Endothelial cell of umbilical vein (primary cell): ENCODE measurements at regions of chr2 and their contacts with region 1.

Region 1: GRCh38 chr2:231110551-231110950 is 14.3 kb downstream of the HTR2B start:
- DNase-seq: peak; percentile 84
- H3K4me3 ChIP-seq: no peak overlapping the region
- H3K27ac ChIP-seq: no peak overlapping the region
- H3K4me1 ChIP-seq: peaks cover 12% of the 10 kb centered on the region
- H3K27me3 ChIP-seq: no peaks in the 10 kb centered on the region
- CTCF ChIP-seq: peak; percentile 15 to 30
- POLR2A ChIP-seq: no peak

Region 2: GRCh38 chr2:231124838-231125568 is 14.5 kb after region 1 on chr2 and contains the start of gene HTR2B:
- CTCF ChIA-PET with region 1: interaction called, 39 read pairs
- POLR2A ChIA-PET with region 1: no interaction called
- dilution Hi-C with region 1: no loop called
- intact Hi-C with region 1: no loop called
- DNase-seq: peak; percentile 69
- H3K4me3 ChIP-seq: peak within 1 kb of the TSS in 1 of 3 experiments; percentile 65
- H3K27ac ChIP-seq: peak within 1 kb of the TSS; percentile 23
- H3K4me1 ChIP-seq: peaks cover 38% of the 10 kb centered on the region
- H3K27me3 ChIP-seq: no peaks in the 10 kb centered on the region
- CTCF ChIP-seq: no peak
- POLR2A ChIP-seq: no peak
- total RNA-seq, gene HTR2B: 0.55 and 0.93 TPM in 2 replicates

Region 3: DNA sequence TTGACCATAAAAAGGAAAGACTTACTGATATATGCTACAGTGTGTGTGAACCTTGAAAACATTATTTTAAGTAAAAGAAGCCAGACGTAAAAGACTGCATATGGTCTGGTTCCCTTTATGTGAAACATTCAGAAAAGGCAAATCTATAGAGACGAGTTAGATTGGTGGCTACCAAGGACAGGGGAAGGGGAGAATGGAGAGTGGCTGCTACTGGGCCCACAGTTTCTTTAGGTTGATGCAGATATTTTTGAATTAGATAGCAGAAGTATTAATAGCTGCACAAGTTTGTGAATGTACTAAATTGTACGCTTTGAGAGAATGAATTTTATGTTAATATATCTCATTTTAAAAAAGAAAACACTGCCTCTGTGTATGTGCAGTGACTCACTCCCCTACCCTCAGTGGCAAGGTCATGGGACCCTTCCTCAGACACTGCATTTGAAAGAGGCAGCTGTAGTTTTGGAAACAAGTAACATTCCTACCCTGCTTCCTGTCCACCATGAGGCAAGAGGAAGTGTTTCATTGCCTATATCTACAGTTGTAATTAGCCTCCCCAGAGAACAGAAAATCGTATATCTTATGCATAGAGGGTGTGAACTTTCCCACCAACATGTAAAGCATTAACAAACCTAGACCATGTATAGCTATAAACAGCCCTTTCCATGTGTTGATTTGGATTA is 58.0 kb after region 1 on chr2:
- CTCF ChIA-PET with region 1: interaction called, 6 read pairs
- POLR2A ChIA-PET with region 1: no interaction called
- dilution Hi-C with region 1: no loop called
- intact Hi-C with region 1: loop called (anchors 2 kb)
- DNase-seq: peak; percentile 80
- H3K4me3 ChIP-seq: no peak overlapping the region
- H3K27ac ChIP-seq: peak overlapping the region; percentile 32
- H3K4me1 ChIP-seq: peaks cover 37% of the 10 kb centered on the region
- H3K27me3 ChIP-seq: no peaks in the 10 kb centered on the region
- CTCF ChIP-seq: no peak
- POLR2A ChIP-seq: peak; percentile 10

Region 4: GRCh38 chr2:231191896-231192872 is 81.6 kb after region 1 on chr2:
- CTCF ChIA-PET with region 1: interaction called, 226 read pairs
- POLR2A ChIA-PET with region 1: no interaction called
- dilution Hi-C with region 1: no loop called
- intact Hi-C with region 1: loop called (anchors 1 kb)
- DNase-seq: peak; percentile 77
- H3K4me3 ChIP-seq: no peak overlapping the region
- H3K27ac ChIP-seq: peak overlapping the region; percentile 47
- H3K4me1 ChIP-seq: peaks cover 24% of the 10 kb centered on the region
- H3K27me3 ChIP-seq: no peaks in the 10 kb centered on the region
- CTCF ChIP-seq: peak; percentile 79 to 88
- POLR2A ChIP-seq: no peak

Region 5: DNA sequence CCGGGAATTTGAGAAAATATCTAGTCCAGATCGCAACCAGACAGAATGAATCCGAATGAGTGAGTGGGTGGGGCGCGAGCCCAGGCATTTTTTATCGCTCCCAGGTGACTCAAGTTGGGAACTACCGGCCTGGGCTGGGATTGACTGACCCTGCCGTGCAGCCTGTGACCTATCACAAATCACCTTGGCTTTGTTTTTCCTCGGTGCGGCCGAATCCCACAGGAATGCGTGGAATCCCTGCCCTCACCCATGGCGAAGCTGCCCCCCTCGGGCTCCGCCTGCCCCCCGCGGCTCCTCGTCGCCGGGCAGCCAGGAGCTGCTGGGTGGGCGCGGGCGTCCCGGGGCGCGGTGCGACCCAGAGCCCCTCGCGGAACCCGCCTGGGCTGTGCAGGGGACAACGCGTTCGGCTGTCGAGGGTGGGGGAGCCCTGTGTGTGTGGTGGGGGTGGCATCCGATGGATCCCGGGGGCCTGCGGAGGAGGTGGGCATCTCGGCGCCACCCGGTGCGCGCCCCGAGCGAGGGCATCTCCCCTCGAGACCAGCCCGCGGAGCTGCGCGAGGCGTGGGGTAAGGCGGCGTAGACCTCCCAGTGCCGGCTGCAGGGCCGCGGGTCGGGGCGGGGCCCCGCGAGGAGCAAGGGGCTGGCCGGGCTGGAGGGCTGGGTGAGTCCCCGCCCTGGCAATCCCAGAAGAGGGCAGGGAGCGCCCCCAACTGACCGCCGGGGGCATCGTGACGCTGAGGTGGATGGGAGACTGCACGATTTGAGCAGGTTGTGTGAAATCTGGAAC is 301.5 kb after region 1 on chr2:
- CTCF ChIA-PET with region 1: interaction called, 8 read pairs
- POLR2A ChIA-PET with region 1: no interaction called
- dilution Hi-C with region 1: no loop called
- intact Hi-C with region 1: loop called (anchors 1 kb)
- DNase-seq: peak; percentile 81
- H3K4me3 ChIP-seq: peak overlapping the region; percentile 18 to 73 (median 21)
- H3K27ac ChIP-seq: no peak overlapping the region
- H3K4me1 ChIP-seq: peaks cover 3% of the 10 kb centered on the region
- H3K27me3 ChIP-seq: no peaks in the 10 kb centered on the region
- CTCF ChIP-seq: peak; percentile 91 to 97
- POLR2A ChIP-seq: no peak